WTC11 (cell line): ENCODE measurements at regions of chr6 and their contacts with region 1.

Region 1: DNA sequence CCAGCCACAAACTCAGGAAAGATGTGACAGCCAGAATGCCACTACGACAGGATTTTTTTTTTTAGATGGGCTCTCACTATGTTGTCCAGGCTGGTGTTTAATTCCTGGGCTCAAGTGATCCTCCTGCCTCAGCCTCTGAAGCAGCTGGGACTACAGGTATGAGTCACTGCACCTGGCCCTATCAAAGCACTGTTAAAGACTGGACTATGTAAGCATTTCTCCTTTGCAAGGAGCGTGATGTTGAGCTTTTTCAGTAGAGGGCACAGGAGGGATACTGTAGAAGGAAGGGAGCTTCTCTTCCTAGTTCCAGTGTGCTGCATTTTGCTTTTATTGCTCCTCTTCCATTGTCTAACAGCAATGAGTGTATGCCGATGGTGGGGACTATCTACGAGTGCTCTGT is 35.8 kb downstream of the ZBTB9 start:
- DNase-seq: no peak
- ATAC-seq: peak; percentile 68
- H3K4me3 Mint-ChIP-seq: no peak overlapping the region
- H3K27ac Mint-ChIP-seq: no peak overlapping the region
- H3K4me1 Mint-ChIP-seq: peaks cover 6% of the 10 kb centered on the region
- H3K27me3 Mint-ChIP-seq: peaks cover 18% of the 10 kb centered on the region
- CTCF ChIP-seq: no peak

Region 2: DNA sequence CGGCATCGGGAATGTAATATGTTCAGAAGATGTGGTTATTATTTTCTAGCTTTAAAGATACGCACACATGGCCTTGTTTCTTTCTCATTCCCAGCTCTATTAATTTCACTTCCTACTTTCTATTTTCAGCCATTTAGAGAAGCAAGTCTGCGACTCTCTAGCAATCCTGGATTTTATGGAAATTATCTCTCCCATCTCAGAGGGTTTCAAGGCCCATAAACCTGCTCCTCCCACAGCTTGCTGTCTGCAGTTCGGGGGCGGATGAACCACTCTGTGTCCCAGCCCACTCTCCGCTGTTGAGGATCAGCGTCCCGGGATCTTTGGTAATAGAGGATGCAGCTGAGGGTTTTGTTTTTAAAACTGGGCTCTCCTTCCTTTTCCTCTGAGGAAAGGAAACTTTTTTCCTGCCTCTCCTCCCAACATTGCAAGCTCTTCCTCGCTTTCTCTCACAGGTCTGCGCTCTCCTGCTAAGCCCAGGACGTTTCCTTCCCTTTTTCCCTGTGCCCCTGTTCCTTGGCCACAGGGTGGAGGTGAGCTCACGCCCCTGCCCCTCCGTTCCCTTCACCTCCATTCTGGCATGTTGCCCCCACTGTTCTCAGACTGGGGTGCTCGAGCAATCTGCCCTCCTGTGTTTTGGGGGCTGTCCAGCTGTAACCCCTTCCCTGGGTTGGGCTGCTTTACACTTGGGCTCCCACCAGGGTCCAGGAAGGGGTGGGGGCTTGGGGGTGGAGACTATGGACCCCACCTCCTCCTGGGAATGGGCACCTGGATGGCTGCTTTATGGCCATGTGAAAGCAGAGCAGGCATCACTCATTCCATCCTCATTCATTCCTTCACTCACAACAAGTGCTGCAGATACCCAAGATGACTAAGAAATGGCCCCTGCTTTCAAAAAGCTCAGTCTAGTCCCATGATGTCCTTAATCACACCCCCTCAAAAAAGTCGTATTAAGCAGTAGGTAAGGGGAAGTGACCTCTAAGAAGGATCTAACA is 19.0 kb after region 1 on chr6:
- CTCF ChIA-PET with region 1: interaction called, 15 read pairs
- POLR2A ChIA-PET with region 1: no interaction called
- DNase-seq: peak; percentile 28
- ATAC-seq: peak; percentile 80
- H3K4me3 Mint-ChIP-seq: peak overlapping the region; percentile 52
- H3K27ac Mint-ChIP-seq: peak overlapping the region; percentile 64
- H3K4me1 Mint-ChIP-seq: peaks cover 25% of the 10 kb centered on the region
- H3K27me3 Mint-ChIP-seq: peaks cover 13% of the 10 kb centered on the region
- CTCF ChIP-seq: no peak

Region 3: DNA sequence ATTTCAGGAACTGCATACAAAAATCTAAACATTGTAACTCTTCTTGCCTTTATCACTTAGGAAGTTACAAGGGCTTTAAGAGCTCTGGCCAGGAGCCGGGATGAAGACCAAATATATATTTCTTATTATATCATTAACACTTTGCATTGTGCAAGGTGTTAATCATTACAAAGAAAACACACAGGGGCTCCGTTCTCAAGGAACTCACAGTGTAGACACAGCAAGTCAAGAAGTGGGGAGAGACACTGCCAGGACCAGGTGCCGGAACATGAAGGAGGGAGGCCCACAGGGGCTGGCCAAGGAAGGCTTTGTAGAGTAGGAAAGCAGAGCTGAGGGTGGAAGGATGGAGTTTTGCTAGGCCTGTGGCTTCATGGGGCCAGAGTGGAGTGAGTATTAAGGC is 148.3 kb after region 1 on chr6:
- CTCF ChIA-PET with region 1: no interaction called
- POLR2A ChIA-PET with region 1: no interaction called
- DNase-seq: no peak
- ATAC-seq: no peak
- H3K4me3 Mint-ChIP-seq: no peak overlapping the region
- H3K27ac Mint-ChIP-seq: no peak overlapping the region; the same call in 1 of the 2 replicates
- H3K4me1 Mint-ChIP-seq: peaks cover 40% of the 10 kb centered on the region
- H3K27me3 Mint-ChIP-seq: 0 out of 2 replicates have a peak, but pooled peaks cover 2% of the 10 kb centered on the region
- CTCF ChIP-seq: no peak